ENCODE measurements at regions of chr20 and their contacts with region 1.

Region 1: DNA sequence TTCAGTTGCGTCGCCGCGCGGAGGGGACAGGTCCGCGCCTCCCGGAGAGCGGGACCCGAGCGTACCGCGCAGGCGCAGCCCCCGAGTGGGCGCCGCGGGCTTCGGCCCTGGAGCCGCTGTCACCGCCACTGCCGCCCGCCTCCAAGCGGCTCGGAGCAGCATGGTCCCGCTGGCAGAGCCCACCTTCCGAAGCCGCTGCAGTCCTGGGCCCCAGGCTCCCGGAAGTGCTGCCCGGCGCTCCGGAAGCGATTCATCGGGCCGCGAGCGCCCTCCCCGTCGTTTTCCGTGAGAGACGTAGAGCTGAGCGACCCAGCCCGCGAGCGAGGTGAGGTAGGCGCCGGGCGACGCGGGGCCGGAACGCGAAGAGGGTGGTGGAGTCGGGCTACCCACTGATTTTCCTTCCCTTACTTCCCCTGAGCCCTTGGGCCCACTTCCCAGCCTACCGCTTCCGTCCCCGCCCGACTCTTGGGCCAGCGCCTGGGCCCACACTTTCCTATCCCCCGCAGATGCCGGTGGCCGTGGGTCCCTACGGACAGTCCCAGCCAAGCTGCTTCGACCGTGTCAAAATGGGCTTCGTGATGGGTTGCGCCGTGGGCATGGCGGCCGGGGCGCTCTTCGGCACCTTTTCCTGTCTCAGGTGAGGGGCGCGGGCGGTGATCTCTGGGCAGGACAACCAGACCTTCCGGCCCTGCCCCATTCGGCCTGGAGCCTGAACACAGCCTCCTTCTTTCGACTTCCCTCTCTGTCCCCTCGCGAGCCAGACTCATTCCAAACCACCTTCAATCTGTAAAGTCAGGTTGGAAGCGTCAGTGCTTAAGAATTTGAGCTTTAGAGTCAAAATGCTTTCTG is at the starts of genes NFS1 and ROMO1:
- DNase-seq: peak; percentile 85
- H3K4me3 Mint-ChIP-seq: peak within 1 kb of the TSS; percentile 98
- H3K27ac Mint-ChIP-seq: peak within 1 kb of the TSS; percentile 99
- H3K4me1 Mint-ChIP-seq: peaks cover 19% of the 10 kb centered on the region
- H3K27me3 Mint-ChIP-seq: no peaks in the 10 kb centered on the region
- CTCF ChIP-seq: no peak
- total RNA-seq, gene NFS1: 27.6 and 28.6 TPM in 2 replicates
- total RNA-seq, gene ROMO1: 173 and 192 TPM in 2 replicates

Region 2: GRCh38 chr20:35511814-35512420 is 187.4 kb before region 1 on chr20:
- CTCF ChIA-PET with region 1: no interaction called
- POLR2A ChIA-PET with region 1: interaction called, 8 read pairs
- intact Hi-C with region 1: loop called (anchors 2 kb)
- DNase-seq: peak; percentile 51
- H3K4me3 Mint-ChIP-seq: no peak overlapping the region
- H3K27ac Mint-ChIP-seq: no peak overlapping the region
- H3K4me1 Mint-ChIP-seq: peaks cover 13% of the 10 kb centered on the region
- H3K27me3 Mint-ChIP-seq: no peaks in the 10 kb centered on the region
- CTCF ChIP-seq: peak; percentile 67

Region 3: DNA sequence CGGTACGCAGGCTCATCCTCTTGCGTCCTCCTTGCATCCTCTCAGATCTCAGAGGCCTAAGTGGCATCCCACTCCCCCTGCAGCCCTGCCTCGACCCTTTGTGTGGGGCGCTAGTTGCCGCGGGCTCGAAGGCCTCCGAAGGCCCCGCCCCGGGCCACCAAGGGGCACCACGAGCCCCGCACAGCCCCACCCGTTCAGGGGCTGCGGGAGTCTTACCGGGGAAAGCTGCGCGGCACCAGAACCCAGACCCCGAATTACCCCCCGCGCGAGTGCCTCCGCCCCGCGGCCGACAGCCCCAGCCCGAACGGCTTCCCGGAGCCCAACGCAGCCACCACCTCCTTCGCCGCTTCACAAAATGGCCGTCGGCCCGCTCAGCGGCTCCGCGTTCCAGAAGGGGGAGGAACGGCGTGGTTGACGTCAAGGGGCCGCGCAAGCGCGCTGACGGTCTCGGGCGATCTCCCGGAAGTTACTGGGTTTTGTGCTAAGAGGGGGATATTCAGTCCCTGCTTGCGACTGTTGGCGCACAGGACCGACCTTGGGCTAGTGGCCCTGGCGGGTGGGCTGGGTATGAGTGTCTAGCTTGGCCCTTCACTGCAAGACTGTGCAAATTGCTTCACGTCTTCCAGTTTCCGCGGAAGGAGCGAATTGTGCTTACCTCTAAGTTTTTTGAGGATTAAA is 34.7 kb before region 1 on chr20 and contains the starts of genes CPNE1 and RBM12:
- CTCF ChIA-PET with region 1: interaction called, 6 read pairs
- POLR2A ChIA-PET with region 1: interaction called, 64 read pairs
- intact Hi-C with region 1: no loop called
- DNase-seq: peak; percentile 90
- H3K4me3 Mint-ChIP-seq: peak within 1 kb of the TSS; percentile 94
- H3K27ac Mint-ChIP-seq: peak within 1 kb of the TSS; percentile 98
- H3K4me1 Mint-ChIP-seq: peaks cover 19% of the 10 kb centered on the region
- H3K27me3 Mint-ChIP-seq: no peaks in the 10 kb centered on the region
- CTCF ChIP-seq: no peak
- total RNA-seq, gene CPNE1: 161 and 194 TPM in 2 replicates
- total RNA-seq, gene RBM12: 60.1 and 64.3 TPM in 2 replicates

Region 4: GRCh38 chr20:35718972-35719635 is 19.8 kb after region 1 on chr20:
- CTCF ChIA-PET with region 1: interaction called, 6 read pairs
- POLR2A ChIA-PET with region 1: interaction called, 130 read pairs
- intact Hi-C with region 1: no loop called
- DNase-seq: no peak
- H3K4me3 Mint-ChIP-seq: no peak overlapping the region
- H3K27ac Mint-ChIP-seq: no peak overlapping the region
- H3K4me1 Mint-ChIP-seq: peaks cover 6% of the 10 kb centered on the region
- H3K27me3 Mint-ChIP-seq: no peaks in the 10 kb centered on the region
- CTCF ChIP-seq: no peak

Region 5: GRCh38 chr20:35735828-35736470 is 36.6 kb after region 1 on chr20:
- CTCF ChIA-PET with region 1: no interaction called
- POLR2A ChIA-PET with region 1: interaction called, 266 read pairs
- intact Hi-C with region 1: no loop called
- DNase-seq: peak; percentile 25
- H3K4me3 Mint-ChIP-seq: peak overlapping the region; percentile 44
- H3K27ac Mint-ChIP-seq: peak overlapping the region; percentile 57
- H3K4me1 Mint-ChIP-seq: peaks cover 29% of the 10 kb centered on the region
- H3K27me3 Mint-ChIP-seq: no peaks in the 10 kb centered on the region
- CTCF ChIP-seq: no peak

Region 6: DNA sequence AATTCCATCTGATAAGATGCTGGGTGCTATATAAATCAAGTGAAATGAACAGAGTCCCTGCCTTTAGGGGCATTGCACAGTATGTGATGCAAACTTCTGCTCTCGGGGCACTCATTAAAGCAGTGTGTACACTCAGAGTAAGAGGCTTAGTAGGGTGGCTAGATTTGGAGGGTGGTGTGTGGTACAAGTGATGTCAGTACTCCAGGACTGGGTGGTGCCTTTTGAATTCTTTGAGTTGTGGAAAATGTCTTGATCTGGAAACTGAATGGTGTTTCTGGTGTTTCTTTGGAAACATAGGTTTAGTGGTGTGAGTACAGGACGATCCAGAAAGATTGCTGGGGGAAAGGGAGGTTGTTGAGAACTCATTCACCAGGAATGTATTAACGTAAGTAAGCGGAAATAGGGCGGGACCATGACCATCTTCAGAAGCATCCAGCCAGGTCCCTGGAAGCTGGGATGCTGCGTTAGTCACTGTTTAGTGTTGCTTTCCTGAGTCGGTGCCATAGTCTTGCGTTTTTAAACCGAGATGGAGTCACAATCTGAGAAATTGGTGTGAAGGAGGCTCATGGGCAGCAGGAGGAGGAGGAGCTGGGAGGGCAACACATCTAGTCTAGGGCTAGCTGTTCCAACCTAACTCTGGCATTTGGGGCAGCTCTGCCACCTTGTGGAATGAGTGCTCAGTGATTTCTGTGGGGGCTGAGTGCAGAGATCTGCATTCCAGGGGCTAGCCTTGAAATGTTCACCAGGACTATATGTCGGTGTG is 184.6 kb after region 1 on chr20:
- CTCF ChIA-PET with region 1: interaction called, 5 read pairs
- POLR2A ChIA-PET with region 1: interaction called, 50 read pairs
- intact Hi-C with region 1: loop called (anchors 5 kb)
- DNase-seq: peak; percentile 99
- H3K4me3 Mint-ChIP-seq: peak overlapping the region; percentile 68
- H3K27ac Mint-ChIP-seq: peak overlapping the region; percentile 100
- H3K4me1 Mint-ChIP-seq: peaks cover 21% of the 10 kb centered on the region
- H3K27me3 Mint-ChIP-seq: no peaks in the 10 kb centered on the region
- CTCF ChIP-seq: peak; percentile 83

Region 7: DNA sequence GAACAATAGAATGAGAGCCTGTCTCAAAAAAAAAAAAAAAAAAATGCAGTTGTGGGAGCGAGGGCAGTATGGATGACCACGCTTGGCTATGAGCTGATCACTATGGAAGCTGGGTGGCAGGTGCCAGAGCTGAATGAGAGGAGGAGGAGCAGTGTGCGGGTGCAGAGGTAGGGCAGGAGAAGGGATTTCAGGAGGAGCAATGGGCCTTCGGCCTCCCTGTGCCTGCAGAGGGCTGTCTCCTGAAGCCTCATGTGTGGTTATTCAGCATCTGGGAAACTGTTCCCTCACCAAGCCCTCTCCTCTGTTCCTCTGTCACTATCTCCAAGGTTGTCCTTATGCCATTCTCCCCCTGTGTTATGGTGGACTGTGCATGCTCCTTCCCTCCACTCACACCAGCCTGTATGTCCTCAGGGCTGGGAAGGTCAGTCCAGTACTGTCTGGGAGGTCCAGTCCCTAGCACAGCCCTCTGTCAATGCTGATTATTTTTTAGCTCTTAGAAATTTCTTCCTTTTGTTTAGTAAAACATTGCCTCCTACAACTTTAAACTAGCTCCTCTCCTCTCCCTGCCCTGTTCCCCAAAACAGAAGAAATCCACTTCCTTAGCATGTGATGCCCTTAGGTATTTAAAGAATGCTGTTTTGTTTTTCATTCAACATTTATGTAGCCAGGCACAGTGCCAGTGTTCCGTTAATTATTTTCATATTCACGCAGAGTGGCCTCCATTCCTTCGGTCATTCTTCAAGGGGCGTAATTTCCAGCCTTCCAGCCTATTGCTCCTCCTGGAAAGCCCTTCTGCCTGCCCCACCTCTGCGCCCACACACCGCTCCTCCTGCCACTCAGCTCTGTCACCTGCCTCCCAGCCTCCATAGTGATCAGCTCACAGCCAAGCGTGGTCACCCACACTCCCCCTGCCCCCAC is 317.9 kb after region 1 on chr20:
- CTCF ChIA-PET with region 1: no interaction called
- POLR2A ChIA-PET with region 1: no interaction called
- intact Hi-C with region 1: no loop called
- DNase-seq: peak; percentile 28
- H3K4me3 Mint-ChIP-seq: no peak overlapping the region
- H3K27ac Mint-ChIP-seq: peak overlapping the region; percentile 79
- H3K4me1 Mint-ChIP-seq: peaks cover 20% of the 10 kb centered on the region
- H3K27me3 Mint-ChIP-seq: no peaks in the 10 kb centered on the region
- CTCF ChIP-seq: no peak

Region 8: DNA sequence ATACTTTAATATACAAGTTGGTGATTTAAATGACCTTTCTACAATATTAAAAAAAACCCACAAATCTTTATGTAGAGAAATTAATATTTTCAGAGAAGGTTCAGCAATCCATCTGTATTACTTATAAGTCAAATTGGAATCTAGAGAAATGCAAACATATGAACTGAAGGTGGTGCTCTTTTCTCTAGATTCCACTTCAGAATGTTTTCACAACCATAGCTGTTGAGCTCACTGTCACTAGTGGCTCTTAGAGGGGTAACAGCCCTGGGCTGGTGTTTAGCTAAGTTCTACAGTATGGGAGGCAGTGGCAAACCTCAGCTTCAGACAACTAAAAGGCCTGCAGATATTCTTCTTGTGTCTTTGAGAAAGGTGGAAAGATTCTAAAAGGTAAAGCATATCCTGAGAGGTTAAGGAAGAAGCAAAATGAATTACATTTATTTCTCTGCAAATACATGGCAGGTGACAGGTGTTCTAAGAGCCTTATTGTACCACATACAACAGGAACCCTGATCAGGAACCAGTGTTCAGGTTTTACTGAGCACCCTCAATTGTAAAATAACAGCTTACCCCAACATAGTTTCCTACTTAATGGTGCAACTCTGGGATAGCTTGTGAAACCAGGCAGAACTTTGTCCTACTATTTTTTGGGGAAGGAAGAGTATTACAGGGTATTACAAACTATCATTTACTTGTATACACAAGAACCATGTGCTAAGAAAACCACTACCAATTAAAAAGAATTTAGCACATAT is 1308.7 kb after region 1 on chr20:
- CTCF ChIA-PET with region 1: no interaction called
- POLR2A ChIA-PET with region 1: no interaction called
- intact Hi-C with region 1: no loop called
- DNase-seq: peak; percentile 16
- H3K4me3 Mint-ChIP-seq: no peak overlapping the region
- H3K27ac Mint-ChIP-seq: no peak overlapping the region
- H3K4me1 Mint-ChIP-seq: no peaks in the 10 kb centered on the region
- H3K27me3 Mint-ChIP-seq: no peaks in the 10 kb centered on the region
- CTCF ChIP-seq: peak; percentile 23